ENCODE measurements at regions of chr16 and their contacts with region 1.

Region 1: GRCh38 chr16:31913668-31914067 is 40.1 kb downstream of the ZNF267 start:
- DNase-seq: no peak
- H3K4me3 ChIP-seq: no peak overlapping the region
- H3K27ac ChIP-seq: no peak overlapping the region
- H3K4me1 ChIP-seq: no peaks in the 10 kb centered on the region
- H3K27me3 ChIP-seq: no peaks in the 10 kb centered on the region
- CTCF ChIP-seq: no peak
- POLR2A ChIP-seq: no peak

Region 2: DNA sequence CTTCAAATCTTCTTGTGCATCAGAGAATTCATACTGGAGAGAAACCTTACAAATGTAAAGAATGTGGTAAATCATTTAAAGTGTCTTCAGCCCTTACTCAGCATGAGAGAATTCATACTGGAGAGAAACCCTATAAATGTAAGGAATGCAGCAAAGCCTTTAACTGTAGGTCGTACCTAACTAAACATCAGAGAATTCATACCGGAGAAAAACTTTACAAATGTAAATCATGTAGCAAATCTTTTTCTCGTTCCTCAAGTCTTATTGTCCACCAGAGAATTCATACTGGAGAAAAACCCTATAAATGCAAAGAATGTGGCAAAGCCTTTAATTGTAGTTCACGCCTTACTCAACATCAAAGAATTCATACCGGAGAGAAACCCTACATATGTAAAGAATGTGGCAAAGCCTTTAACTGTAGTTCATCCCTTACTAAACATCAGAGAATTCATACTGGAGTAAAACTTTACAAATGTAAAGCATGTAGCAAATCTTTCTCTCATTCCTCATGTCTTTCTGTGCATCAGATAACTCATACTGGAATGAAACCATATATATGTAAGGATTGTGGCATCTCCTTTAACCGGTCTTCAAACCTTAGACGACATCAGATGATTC is 158.6 kb before region 1 on chr16:
- intact Hi-C with region 1: loop called (anchors 5 kb)
- DNase-seq: no peak
- H3K4me3 ChIP-seq: no peak overlapping the region
- H3K27ac ChIP-seq: no peak overlapping the region
- H3K4me1 ChIP-seq: no peaks in the 10 kb centered on the region
- H3K27me3 ChIP-seq: no peaks in the 10 kb centered on the region
- CTCF ChIP-seq: no peak
- POLR2A ChIP-seq: no peak